Colonic mucosa (tissue), 4 donors: ENCODE measurements at regions of chr22 and their contacts with region 1.

Region 1: DNA sequence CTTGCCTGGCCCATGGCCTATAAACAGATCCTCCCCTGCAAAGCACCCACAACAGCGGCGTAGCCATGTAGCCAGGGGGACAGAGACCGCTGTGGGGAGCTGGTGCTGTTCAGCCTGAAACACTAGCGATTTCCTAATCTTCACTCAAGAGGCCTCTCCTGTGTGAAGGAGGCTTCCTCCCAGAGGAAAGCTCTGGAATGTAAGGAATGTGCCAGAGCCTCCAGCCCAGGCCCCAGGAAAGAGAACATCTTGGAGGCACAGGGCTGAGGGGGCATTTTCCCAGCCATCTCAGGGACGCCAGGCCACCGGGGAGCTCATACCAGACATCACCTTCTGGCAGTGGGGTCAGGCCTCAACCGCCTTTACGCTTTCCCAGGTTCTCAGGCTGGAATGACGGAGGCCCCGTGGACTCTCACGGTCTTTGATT is 24.0 kb downstream of the MIAT start:
- DNase-seq: no peak
- H3K4me3 ChIP-seq: no peak overlapping the region
- H3K27ac ChIP-seq: no peak overlapping the region
- H3K4me1 ChIP-seq: no peaks in the 10 kb centered on the region
- H3K27me3 ChIP-seq: no peaks in the 10 kb centered on the region
- CTCF ChIP-seq: no peak

Region 2: GRCh38 chr22:27331526-27332281 is 650.3 kb after region 1 on chr22:
- intact Hi-C with region 1: loop called (anchors 10 kb)
- DNase-seq: no peak
- H3K4me3 ChIP-seq: no peak overlapping the region
- H3K27ac ChIP-seq: no peak overlapping the region
- H3K4me1 ChIP-seq: no peaks in the 10 kb centered on the region
- H3K27me3 ChIP-seq: peaks cover 5% of the 10 kb centered on the region
- CTCF ChIP-seq: peak; percentile 22